Breast epithelium (tissue), 4 donors: ENCODE measurements at regions of chr12 and their contacts with region 1.

Region 1: GRCh38 chr12:79566473-79567174 is 124.1 kb downstream of the PAWR start:
- DNase-seq: no peak
- H3K4me3 ChIP-seq: no peak overlapping the region
- H3K27ac ChIP-seq: peak overlapping the region in 1 of 2 donors; percentile 14
- H3K4me1 ChIP-seq: no peaks in the 10 kb centered on the region
- H3K27me3 ChIP-seq: no peaks in the 10 kb centered on the region
- CTCF ChIP-seq: no peak
- POLR2A ChIP-seq: no peak

Region 2: GRCh38 chr12:79426121-79426520 is 140.5 kb before region 1 on chr12:
- intact Hi-C with region 1: no loop called
- DNase-seq: no peak
- H3K4me3 ChIP-seq: no peak overlapping the region
- H3K27ac ChIP-seq: peak overlapping the region; percentile 31 to 60
- H3K4me1 ChIP-seq: no peaks in the 10 kb centered on the region
- H3K27me3 ChIP-seq: no peaks in the 10 kb centered on the region
- CTCF ChIP-seq: no peak
- POLR2A ChIP-seq: no peak

Region 3: GRCh38 chr12:79690638-79691493 is 124.2 kb after region 1 on chr12 and contains the start of gene PAWR:
- intact Hi-C with region 1: loop called (anchors 10 kb)
- DNase-seq: peak; percentile 73 to 75
- H3K4me3 ChIP-seq: peak within 1 kb of the TSS; percentile 77 to 98 (median 92)
- H3K27ac ChIP-seq: peak within 1 kb of the TSS; percentile 94 to 98
- H3K4me1 ChIP-seq: peaks cover 0 to 6% of the 10 kb centered on the region in 2 donors
- H3K27me3 ChIP-seq: no peaks in the 10 kb centered on the region
- CTCF ChIP-seq: no peak
- POLR2A ChIP-seq: no peak
- total RNA-seq, gene PAWR: 17.0 to 155 (median 101) TPM

Region 4: DNA sequence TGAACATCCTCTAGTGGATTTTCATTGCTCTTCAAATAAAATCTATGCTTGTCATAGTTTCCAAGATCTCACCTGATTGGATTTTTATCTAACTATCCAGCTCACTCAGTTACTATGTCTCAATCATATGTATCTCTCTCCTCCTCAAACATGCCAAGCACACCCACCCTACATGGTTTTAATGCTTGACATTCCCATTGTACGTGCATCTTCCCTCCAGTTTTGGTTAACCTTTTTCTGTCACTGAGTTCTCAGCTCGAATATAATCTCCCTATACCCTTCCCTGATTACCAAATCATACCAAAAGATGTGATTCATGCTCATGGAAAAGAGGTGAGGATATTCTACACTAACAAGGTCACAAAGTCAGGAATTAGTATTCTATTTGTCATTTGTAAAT is 865.4 kb after region 1 on chr12:
- intact Hi-C with region 1: no loop called
- DNase-seq: no peak
- H3K4me3 ChIP-seq: no peak overlapping the region
- H3K27ac ChIP-seq: no peak overlapping the region
- H3K4me1 ChIP-seq: no peaks in the 10 kb centered on the region
- H3K27me3 ChIP-seq: no peaks in the 10 kb centered on the region
- CTCF ChIP-seq: no peak
- POLR2A ChIP-seq: no peak